Right cardiac atrium (tissue), 5 donors: ENCODE measurements at regions of chr12 and their contacts with region 1.

Region 1: DNA sequence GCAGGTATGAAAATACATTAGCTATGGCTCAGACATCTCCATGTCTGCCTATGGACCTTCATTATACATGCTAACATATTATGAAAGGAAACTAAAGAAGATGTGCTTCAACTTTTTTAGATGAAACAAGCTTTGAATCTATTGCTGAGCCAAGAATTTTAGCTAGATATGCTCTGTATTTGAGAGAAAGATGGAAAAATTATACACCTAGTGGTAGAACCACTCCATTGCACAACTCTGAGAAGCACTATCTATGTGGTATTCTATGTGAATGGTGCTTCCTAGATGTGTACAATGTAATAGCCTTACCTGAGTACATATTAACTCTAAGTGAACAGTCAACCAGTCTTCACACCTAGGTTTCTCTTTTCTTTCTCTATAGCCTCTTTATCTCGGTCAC is 17.3 kb downstream of the EPYC start:
- DNase-seq: no peak
- ATAC-seq: no peak
- H3K4me3 ChIP-seq: no peak overlapping the region
- H3K27ac ChIP-seq: no peak overlapping the region
- H3K4me1 ChIP-seq: no peaks in the 10 kb centered on the region
- H3K27me3 ChIP-seq: no peaks in the 10 kb centered on the region

Region 2: DNA sequence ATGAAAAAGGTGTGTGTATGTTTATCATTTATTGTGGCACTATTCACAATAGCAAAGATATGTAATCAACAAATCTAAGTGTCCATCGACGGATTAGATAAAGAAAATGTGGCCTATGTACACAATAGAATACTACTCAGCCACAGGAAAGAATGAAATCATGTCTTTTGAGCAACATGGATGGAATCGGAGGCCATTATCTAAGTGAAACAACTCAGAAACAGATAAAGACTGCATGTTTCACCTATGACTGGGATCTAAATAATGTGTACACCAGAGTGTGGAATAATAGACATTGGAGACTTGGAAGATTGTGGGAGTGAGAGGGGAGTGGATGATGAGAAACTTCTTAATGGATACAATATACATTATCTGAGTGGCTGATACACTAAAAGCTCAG is 76.6 kb before region 1 on chr12:
- intact Hi-C with region 1: no loop called
- DNase-seq: no peak
- ATAC-seq: no peak
- H3K4me3 ChIP-seq: no peak overlapping the region
- H3K27ac ChIP-seq: no peak overlapping the region
- H3K4me1 ChIP-seq: no peaks in the 10 kb centered on the region
- H3K27me3 ChIP-seq: no peaks in the 10 kb centered on the region

Region 3: GRCh38 chr12:91033251-91033650 is 45.7 kb after region 1 on chr12:
- intact Hi-C with region 1: no loop called
- DNase-seq: no peak
- ATAC-seq: no peak
- H3K4me3 ChIP-seq: no peak overlapping the region
- H3K27ac ChIP-seq: no peak overlapping the region
- H3K4me1 ChIP-seq: no peaks in the 10 kb centered on the region
- H3K27me3 ChIP-seq: no peaks in the 10 kb centered on the region

Region 4: GRCh38 chr12:91043408-91043807 is 55.9 kb after region 1 on chr12:
- intact Hi-C with region 1: no loop called
- DNase-seq: no peak
- ATAC-seq: no peak
- H3K4me3 ChIP-seq: no peak overlapping the region
- H3K27ac ChIP-seq: no peak overlapping the region
- H3K4me1 ChIP-seq: no peaks in the 10 kb centered on the region
- H3K27me3 ChIP-seq: no peaks in the 10 kb centered on the region

Region 5: DNA sequence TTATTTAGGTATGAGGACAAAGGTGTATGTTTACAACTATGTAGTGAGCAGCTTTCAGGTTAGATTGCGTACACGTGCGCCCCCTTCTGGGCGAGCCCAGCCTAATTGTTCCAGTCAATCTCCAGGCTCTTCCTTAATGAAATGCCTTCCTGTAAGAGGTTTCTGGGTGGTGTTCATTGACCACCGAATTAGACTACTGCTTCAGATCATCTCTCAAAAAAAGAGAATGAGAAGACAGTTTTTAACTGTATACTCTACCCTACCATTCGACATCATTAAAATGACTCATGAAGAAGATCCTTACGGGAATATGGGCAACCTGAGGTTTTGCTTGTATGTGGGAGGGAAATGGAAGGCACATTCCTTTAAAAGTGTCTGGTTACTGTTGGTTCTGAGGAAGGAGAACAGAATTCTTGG is 121.6 kb after region 1 on chr12:
- intact Hi-C with region 1: loop called in 2 of 4 experiments (anchors 5 to 10 kb)
- DNase-seq: peak; percentile 73 to 95 (median 88)
- ATAC-seq: peak; percentile 80 to 81
- H3K4me3 ChIP-seq: peak overlapping the region; percentile 52
- H3K27ac ChIP-seq: no peak overlapping the region
- H3K4me1 ChIP-seq: no peaks in the 10 kb centered on the region
- H3K27me3 ChIP-seq: no peaks in the 10 kb centered on the region

Region 6: GRCh38 chr12:91332302-91332701 is 344.8 kb after region 1 on chr12:
- intact Hi-C with region 1: loop called in 1 of 4 experiments (anchors 10 kb)
- DNase-seq: no peak
- ATAC-seq: no peak
- H3K4me3 ChIP-seq: no peak overlapping the region
- H3K27ac ChIP-seq: no peak overlapping the region
- H3K4me1 ChIP-seq: no peaks in the 10 kb centered on the region
- H3K27me3 ChIP-seq: no peaks in the 10 kb centered on the region

Region 7: DNA sequence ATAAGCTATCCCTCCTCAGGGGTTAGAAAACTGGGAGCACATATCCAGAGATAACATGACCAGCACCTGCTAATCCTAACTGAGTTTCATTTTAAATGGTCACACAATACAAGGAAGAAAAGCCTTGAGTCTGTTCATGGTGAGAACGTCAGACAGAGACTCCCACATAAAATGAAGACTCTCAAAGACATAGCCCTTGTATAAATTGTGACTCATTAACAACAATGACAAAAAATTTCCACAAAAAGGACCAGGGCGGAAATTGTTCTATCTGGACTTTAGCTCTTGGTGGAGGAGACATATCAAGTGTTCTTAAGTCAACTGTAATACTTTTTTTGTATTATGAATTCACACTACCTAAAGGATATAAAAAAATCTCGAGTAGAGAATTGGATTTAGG is 508.8 kb after region 1 on chr12:
- intact Hi-C with region 1: no loop called
- DNase-seq: no peak
- ATAC-seq: no peak
- H3K4me3 ChIP-seq: no peak overlapping the region
- H3K27ac ChIP-seq: no peak overlapping the region
- H3K4me1 ChIP-seq: no peaks in the 10 kb centered on the region
- H3K27me3 ChIP-seq: peaks cover 2% of the 10 kb centered on the region